Sigmoid colon (tissue), 7 donors: ENCODE measurements at regions of chr9 and their contacts with region 1.

Region 1: GRCh38 chr9:118670011-118670953 is 699.0 kb downstream of the BRINP1 start:
- DNase-seq: no peak
- H3K4me3 ChIP-seq: no peak overlapping the region
- H3K27ac ChIP-seq: no peak overlapping the region
- H3K4me1 ChIP-seq: peaks cover 0 to 8% (median 0%) of the 10 kb centered on the region in 4 donors
- H3K27me3 ChIP-seq: no peaks in the 10 kb centered on the region
- CTCF ChIP-seq: no peak
- EP300 ChIP-seq: no peak
- POLR2A ChIP-seq: no peak

Region 2: GRCh38 chr9:117907420-117907819 is 762.9 kb before region 1 on chr9:
- intact Hi-C with region 1: no loop called
- DNase-seq: no peak
- H3K4me3 ChIP-seq: no peak overlapping the region
- H3K27ac ChIP-seq: no peak overlapping the region
- H3K4me1 ChIP-seq: no peaks in the 10 kb centered on the region
- H3K27me3 ChIP-seq: no peaks in the 10 kb centered on the region
- CTCF ChIP-seq: no peak
- EP300 ChIP-seq: no peak
- POLR2A ChIP-seq: no peak

Region 3: DNA sequence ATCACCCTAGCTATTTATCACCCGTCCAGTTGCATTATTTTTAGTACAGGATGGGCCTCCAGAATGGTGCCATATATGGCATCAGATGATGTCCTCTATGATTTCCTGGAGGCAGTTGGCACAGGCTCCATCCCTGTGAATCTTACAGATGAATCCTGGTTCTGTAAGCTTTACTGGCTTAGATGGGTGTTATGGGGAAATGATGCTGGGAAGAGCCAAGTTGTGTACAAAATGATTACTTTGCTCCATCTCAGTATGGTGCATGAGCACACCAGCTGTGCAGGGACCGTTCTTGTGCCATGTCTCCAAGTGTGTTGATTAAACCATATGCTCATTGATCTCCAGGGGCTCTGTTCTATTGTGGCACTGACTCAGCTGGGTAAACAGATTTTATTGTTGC is 210.4 kb before region 1 on chr9:
- intact Hi-C with region 1: loop called (anchors 10 kb)
- DNase-seq: peak; percentile 86
- H3K4me3 ChIP-seq: no peak overlapping the region
- H3K27ac ChIP-seq: peak overlapping the region in 2 of 4 donors; percentile 70 to 74
- H3K4me1 ChIP-seq: peaks cover 0 to 13% (median 6%) of the 10 kb centered on the region in 4 donors
- H3K27me3 ChIP-seq: no peaks in the 10 kb centered on the region
- CTCF ChIP-seq: no peak
- EP300 ChIP-seq: peak in 3 of 4 donors; percentile 35 to 80 (median 68)
- POLR2A ChIP-seq: no peak

Region 4: DNA sequence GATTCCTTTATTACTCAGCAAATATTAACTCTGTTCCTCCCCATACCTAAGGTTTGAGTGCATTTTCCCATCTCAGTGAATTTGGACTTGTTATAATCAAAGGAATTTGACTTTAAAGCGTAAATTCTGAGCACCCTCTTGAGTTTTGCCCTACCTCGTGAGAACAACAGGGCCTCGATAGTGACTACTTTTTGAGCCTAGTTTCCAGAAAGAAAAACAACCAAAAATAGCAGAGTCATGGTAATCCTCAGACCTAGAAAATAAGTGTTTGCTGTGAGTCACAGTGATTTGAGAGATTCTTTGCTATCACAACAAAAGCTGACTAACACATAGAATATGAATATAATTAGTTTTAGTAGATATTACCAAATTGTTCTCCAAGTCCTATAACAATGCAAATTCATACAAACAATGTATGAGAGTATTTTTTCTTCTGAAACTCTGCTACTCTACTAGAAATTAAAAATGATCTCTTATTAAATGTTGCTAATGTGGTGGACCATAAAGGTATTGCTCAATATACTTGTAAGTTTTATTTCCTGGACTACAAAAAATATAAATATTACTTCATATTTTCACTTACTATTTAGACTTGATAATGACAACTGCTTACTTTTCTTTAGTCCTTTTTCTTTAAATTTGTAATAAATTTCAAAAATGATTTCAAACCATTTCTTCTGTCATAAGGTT is 60.8 kb before region 1 on chr9:
- intact Hi-C with region 1: loop called (anchors 5 kb)
- DNase-seq: no peak
- H3K4me3 ChIP-seq: no peak overlapping the region
- H3K27ac ChIP-seq: no peak overlapping the region
- H3K4me1 ChIP-seq: peaks cover 0 to 13% (median 5%) of the 10 kb centered on the region in 4 donors
- H3K27me3 ChIP-seq: no peaks in the 10 kb centered on the region
- CTCF ChIP-seq: no peak
- EP300 ChIP-seq: no peak
- POLR2A ChIP-seq: no peak

Region 5: DNA sequence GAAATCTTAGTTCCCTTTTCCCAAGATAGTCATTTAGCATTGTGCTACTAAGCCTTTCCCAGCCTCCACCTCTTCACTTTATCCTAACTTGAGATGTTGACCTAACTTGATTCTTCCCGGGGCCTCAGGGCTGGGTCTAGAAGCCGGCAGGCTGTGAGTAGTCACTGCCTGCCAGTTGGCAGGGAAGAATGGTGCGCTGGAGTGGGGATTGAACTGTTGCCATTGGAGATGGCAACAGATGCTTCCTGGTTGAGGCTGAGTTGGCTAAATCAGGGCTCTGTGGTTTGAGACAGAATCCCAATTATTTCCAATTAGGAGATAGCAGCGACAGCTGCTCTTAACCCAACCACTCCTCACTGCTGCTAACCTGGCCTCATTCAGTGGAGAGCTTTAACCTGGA is 355.8 kb after region 1 on chr9:
- intact Hi-C with region 1: loop called (anchors 10 kb)
- DNase-seq: peak; percentile 69
- H3K4me3 ChIP-seq: no peak overlapping the region
- H3K27ac ChIP-seq: peak overlapping the region; percentile 68 to 83 (median 78)
- H3K4me1 ChIP-seq: peaks cover 0 to 32% (median 21%) of the 10 kb centered on the region in 4 donors
- H3K27me3 ChIP-seq: no peaks in the 10 kb centered on the region
- CTCF ChIP-seq: no peak
- EP300 ChIP-seq: no peak
- POLR2A ChIP-seq: no peak